Endothelial cell of umbilical vein (primary cell): ENCODE measurements at regions of chr2 and their contacts with region 1.

Region 1: GRCh38 chr2:70553584-70554337 is at the start of gene TGFA:
- DNase-seq: peak; percentile 38
- H3K4me3 ChIP-seq: peak within 1 kb of the TSS; percentile 29 to 45 (median 35)
- H3K27ac ChIP-seq: no peak within 1 kb of the TSS
- H3K4me1 ChIP-seq: peaks cover 9% of the 10 kb centered on the region
- H3K27me3 ChIP-seq: peaks cover 48 to 51% of the 10 kb centered on the region in 2 experiments
- CTCF ChIP-seq: peak; percentile 69 to 91
- POLR2A ChIP-seq: no peak
- total RNA-seq, gene TGFA: 0.12 and 0.22 TPM in 2 replicates

Region 2: DNA sequence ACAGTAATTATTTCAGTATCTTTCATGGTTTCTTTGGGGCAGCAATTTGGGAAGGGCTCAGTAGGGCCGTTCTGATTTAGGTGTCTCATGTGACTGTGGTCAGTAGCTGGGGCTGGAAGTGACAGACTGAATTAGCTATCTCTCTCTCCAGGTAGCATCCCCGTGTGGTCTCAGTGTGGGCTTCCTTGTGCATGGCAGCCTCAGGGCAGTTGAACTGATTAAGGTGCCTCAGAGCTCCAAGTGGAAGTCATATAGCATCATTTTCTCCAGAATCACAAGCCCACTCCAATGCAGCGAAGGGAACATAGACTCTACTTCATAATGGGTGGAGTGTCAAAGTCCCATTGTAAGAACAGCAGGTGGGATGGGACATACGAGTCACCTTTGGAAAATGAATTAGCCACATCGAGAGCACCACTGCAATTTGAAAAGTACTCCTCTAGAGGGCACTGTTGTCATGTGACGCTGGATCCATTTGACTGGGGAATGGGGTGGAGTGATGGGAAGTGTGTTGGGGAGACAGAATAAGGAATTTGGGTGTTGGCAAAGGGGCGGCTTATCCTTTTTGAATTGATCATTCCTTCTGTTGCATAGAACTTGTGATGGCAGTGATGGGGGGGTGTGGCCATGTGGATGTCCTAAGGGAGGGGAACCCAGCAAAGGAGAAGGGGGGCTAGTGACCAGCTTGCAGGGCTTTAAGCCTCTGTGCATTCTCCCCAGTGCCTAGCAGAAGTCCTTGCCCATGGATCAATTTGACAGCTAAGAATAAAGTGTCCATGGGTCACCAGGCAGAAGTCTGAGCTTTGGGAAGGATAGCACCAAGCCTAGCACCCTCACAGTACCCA is 212.6 kb before region 1 on chr2:
- CTCF ChIA-PET with region 1: interaction called, 8 read pairs
- POLR2A ChIA-PET with region 1: no interaction called
- dilution Hi-C with region 1: no loop called
- intact Hi-C with region 1: loop called (anchors 5 kb)
- DNase-seq: peak; percentile 55
- H3K4me3 ChIP-seq: no peak overlapping the region
- H3K27ac ChIP-seq: no peak overlapping the region
- H3K4me1 ChIP-seq: no peaks in the 10 kb centered on the region
- H3K27me3 ChIP-seq: no peaks in the 10 kb centered on the region
- CTCF ChIP-seq: peak; percentile 71 to 82
- POLR2A ChIP-seq: no peak

Region 3: DNA sequence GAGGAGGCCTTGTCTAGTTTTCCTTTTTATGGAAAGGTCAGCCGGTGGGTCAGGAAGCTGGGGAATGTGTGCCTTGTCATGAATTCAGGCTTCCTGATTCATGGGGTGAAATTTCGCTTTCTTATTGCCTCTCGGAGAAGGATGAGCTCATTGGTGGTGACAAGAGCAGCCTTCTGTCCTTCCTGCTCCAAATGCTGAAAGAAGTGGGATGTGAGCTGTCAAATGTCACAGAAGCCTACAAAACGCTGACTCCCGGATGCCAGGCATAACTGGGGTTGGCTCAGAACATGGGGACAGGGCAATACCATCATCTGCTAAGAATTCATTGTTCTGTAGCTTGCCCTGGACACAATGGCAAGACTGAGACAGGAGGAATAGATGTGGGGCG is 196.1 kb before region 1 on chr2:
- CTCF ChIA-PET with region 1: interaction called, 3 read pairs
- POLR2A ChIA-PET with region 1: no interaction called
- dilution Hi-C with region 1: no loop called
- intact Hi-C with region 1: loop called (anchors 5 kb)
- DNase-seq: no peak
- H3K4me3 ChIP-seq: no peak overlapping the region
- H3K27ac ChIP-seq: peak overlapping the region; percentile 81
- H3K4me1 ChIP-seq: peaks cover 38% of the 10 kb centered on the region
- H3K27me3 ChIP-seq: no peaks in the 10 kb centered on the region
- CTCF ChIP-seq: no peak
- POLR2A ChIP-seq: no peak

Region 4: DNA sequence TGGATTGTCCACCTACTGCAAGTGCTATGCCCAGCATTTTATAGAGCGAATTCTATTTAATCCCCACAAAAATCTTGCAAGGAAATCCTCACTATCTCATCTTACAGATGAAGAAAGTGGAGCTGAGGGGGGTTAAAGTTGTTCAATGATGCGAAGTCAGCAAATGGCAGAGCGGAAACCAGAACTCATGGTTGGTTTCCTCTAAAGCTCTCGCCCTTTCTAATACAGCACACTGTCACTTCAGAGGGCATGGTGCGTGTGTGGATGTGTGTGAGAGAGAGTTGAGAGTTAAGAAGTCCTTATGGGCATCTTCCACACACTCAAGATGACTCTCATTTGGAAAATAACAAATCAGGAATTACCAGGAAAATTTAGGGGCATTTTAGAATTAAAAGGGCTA is 78.5 kb before region 1 on chr2:
- CTCF ChIA-PET with region 1: no interaction called
- POLR2A ChIA-PET with region 1: no interaction called
- dilution Hi-C with region 1: no loop called
- intact Hi-C with region 1: loop called (anchors 5 kb)
- DNase-seq: no peak
- H3K4me3 ChIP-seq: no peak overlapping the region
- H3K27ac ChIP-seq: no peak overlapping the region
- H3K4me1 ChIP-seq: no peaks in the 10 kb centered on the region
- H3K27me3 ChIP-seq: peaks cover 27 to 34% of the 10 kb centered on the region in 2 experiments
- CTCF ChIP-seq: no peak
- POLR2A ChIP-seq: no peak